Activated CD4-positive, alpha-beta T cell treated with anti-CD3 and anti-CD28 coated beads, Interleukin-2, amount 10 ng/mL, durations not matched to agents 24 days and 14 days (primary cell): ENCODE measurements at regions of chr2 and their contacts with region 1.

Region 1: DNA sequence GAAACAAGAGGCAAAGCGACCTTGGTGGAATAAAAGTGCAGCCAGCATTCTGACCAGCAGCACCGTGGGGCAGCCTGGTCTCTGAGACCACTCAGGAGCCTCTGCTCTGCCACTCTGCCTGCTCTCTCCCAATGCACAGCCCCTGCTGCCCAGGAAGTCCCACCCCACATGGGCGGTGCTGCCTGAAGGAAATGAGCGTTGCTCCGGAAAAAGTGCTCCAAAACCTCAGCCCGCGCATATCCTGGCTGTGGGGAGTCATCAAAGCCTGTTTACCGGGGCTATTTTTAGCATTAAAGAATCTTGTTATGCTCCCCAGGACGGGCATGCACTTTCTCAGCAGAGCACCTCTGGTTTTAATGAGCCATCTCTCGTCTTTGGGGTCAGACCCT is 54.5 kb downstream of the EPAS1 start:
- DNase-seq: peak; percentile 93
- H3K4me3 Mint-ChIP-seq: peak overlapping the region; percentile 78
- H3K27ac Mint-ChIP-seq: peak overlapping the region; percentile 94
- H3K4me1 Mint-ChIP-seq: peaks cover 63% of the 10 kb centered on the region
- H3K27me3 Mint-ChIP-seq: no peaks in the 10 kb centered on the region

Region 2: DNA sequence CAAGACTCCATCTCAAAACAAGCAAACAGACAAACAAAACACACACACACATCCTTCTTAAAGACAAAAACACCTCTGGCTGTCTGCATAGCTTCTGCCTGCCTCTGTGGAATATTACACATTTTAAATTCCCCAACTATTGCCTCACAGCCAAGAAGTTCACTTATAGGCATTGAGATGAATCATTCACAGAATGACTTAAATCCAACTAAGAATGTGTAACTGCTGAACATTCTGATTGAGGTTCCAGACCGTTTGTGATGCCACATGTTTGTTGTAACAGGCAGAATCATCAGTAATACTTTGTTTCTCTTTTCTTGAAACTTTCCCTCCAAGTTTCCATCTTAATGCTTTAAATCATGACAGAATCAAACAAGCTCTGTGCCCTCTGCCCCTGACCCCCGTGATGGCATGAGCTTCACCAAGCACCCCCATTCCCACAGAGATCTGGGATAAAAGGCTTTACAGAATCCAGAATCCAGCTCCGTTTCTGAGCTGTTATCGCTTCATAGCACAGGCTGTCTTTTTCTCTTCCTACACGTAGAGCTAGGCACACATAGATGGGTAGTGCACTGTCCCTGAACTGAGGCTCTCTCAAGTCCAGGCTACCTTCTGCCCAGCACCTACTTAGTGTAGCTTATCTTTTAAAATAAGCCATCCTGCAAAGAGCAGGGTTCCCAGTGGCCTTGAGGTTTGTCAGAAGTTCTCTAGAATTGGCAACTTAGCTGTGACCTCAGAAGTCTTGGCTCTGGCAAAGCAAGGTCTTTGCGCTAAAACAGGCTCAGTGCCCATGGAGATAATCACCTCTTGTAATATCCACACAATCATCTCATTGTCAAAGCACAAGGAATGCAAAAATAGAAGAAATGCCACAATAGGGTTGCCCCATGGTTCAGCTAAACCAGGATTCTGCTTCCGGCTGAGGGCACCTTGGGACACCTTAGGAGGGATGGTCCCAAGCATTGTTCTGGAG is 21.7 kb before region 1 on chr2:
- intact Hi-C with region 1: loop called (anchors 2 kb)
- DNase-seq: no peak
- H3K4me3 Mint-ChIP-seq: no peak overlapping the region
- H3K27ac Mint-ChIP-seq: peak overlapping the region; percentile 17
- H3K4me1 Mint-ChIP-seq: peaks cover 16% of the 10 kb centered on the region
- H3K27me3 Mint-ChIP-seq: peaks cover 19% of the 10 kb centered on the region